Heart right ventricle (tissue), 16 donors: ENCODE measurements at regions of chr7 and their contacts with region 1.

Region 1: GRCh38 chr7:40057292-40057691 is 77.1 kb downstream of the MPLKIP start:
- DNase-seq: peak in 1 of 2 donors; percentile 55
- ATAC-seq: peak in 7 of 8 donors; percentile 38 to 83 (median 79)
- H3K4me3 ChIP-seq: no peak overlapping the region
- H3K27ac ChIP-seq: no peak overlapping the region
- H3K4me1 ChIP-seq: peaks cover 0 to 23% (median 8%) of the 10 kb centered on the region in 9 donors
- H3K27me3 ChIP-seq: no peaks in the 10 kb centered on the region
- CTCF ChIP-seq: no peak

Region 2: GRCh38 chr7:39580149-39580874 is 477.0 kb before region 1 on chr7:
- intact Hi-C with region 1: loop called in 2 of 10 experiments (anchors 10 kb)
- DNase-seq: peak; percentile 47 to 81
- ATAC-seq: peak; percentile 87 to 94 (median 90)
- H3K4me3 ChIP-seq: no peak overlapping the region
- H3K27ac ChIP-seq: no peak overlapping the region
- H3K4me1 ChIP-seq: peaks cover 0 to 4% (median 0%) of the 10 kb centered on the region in 9 donors
- H3K27me3 ChIP-seq: no peaks in the 10 kb centered on the region
- CTCF ChIP-seq: peak; percentile 75 to 91 (median 83)

Region 3: GRCh38 chr7:39894904-39895303 is 162.4 kb before region 1 on chr7:
- intact Hi-C with region 1: loop called (anchors 1 to 5 kb)
- DNase-seq: no peak
- ATAC-seq: no peak
- H3K4me3 ChIP-seq: no peak overlapping the region
- H3K27ac ChIP-seq: no peak overlapping the region
- H3K4me1 ChIP-seq: peaks cover 0 to 11% (median 0%) of the 10 kb centered on the region in 9 donors
- H3K27me3 ChIP-seq: peaks cover 0 to 10% (median 0%) of the 10 kb centered on the region in 7 donors
- CTCF ChIP-seq: no peak